Activated B cell treated with CpG ODN at 0.5 μM for 24 hours (primary cell): ENCODE measurements at regions of chr3 and their contacts with region 1.

Region 1: DNA sequence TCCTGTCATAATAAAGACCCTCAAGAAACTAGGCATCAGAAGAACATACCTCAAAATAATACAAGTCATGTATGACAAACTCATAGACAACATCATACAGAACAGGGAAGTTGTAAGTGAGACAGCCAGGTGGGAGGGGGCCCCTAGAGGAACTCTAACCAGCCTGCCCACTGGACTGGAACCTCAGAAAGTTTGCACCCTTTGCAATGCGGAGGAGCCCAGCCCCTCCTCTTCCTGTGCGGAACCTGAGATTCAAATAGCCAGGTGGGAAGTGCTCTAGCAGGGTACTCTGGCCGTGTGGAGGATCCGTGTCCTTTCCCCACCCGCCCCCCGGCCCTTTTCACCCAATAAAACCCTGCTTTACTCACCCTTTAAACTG is 387.0 kb upstream of the CBLB start:
- DNase-seq: peak; percentile 56
- ATAC-seq: peak; percentile 96
- H3K4me3 Mint-ChIP-seq: peak overlapping the region; percentile 86
- H3K27ac Mint-ChIP-seq: peak overlapping the region; percentile 86
- H3K4me1 Mint-ChIP-seq: peaks cover 42% of the 10 kb centered on the region
- H3K27me3 Mint-ChIP-seq: no peaks in the 10 kb centered on the region
- CTCF ChIP-seq: no peak

Region 2: DNA sequence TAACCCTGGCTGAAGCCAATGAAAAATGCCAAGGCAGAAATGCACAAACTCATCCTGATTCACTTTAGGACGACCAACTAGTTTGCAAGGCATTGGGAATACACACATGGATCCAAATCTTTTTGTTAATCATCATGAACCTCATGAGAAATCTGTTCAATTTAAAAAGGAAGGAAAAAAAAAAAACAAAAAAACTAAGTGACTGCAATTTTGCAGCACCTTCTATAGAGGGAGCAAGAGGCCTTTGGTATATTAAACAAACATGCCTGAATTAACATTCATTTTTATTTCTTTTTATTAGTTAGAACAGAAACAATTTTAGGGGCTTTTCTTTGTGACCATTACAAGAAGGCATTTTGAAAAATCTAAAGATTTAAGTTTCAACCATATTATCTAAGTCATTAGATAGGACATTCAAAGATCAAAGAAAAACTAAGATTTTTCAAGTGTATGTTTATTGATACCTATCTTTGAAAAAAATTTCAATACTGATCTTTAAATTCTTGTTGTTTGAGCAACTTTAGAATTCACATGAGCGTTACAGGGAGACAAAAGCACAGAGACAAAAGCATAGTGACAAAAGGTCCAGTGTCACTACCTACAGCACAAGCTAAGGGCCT is 569.5 kb before region 1 on chr3:
- CTCF ChIA-PET with region 1: no interaction called
- POLR2A ChIA-PET with region 1: no interaction called
- intact Hi-C with region 1: loop called (anchors 10 kb)
- DNase-seq: no peak
- ATAC-seq: peak; percentile 40
- H3K4me3 Mint-ChIP-seq: no peak overlapping the region
- H3K27ac Mint-ChIP-seq: peak overlapping the region; percentile 41
- H3K4me1 Mint-ChIP-seq: peaks cover 8% of the 10 kb centered on the region
- H3K27me3 Mint-ChIP-seq: no peaks in the 10 kb centered on the region
- CTCF ChIP-seq: peak; percentile 65

Region 3: DNA sequence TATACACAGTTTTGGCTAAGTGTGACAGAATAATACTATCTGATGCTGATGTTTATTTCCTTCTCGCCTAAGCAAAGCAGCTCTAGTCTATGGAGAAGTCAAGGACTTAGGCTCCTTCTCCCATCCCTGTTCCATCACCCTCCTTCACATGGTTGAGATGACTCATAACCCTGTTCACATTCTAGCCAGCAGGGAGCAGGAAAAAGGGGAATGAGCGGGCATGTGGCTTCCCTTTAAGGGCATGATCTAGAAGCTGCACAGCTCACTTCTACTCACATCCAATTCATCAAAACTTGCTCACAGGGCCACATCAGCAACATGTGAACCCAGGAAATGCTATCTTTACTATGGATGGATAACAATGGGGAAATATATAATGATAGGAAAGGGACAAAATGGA is 427.9 kb before region 1 on chr3:
- CTCF ChIA-PET with region 1: no interaction called
- POLR2A ChIA-PET with region 1: interaction called, 12 read pairs
- intact Hi-C with region 1: no loop called
- DNase-seq: no peak
- ATAC-seq: no peak
- H3K4me3 Mint-ChIP-seq: no peak overlapping the region
- H3K27ac Mint-ChIP-seq: peak overlapping the region; percentile 50
- H3K4me1 Mint-ChIP-seq: peaks cover 72% of the 10 kb centered on the region
- H3K27me3 Mint-ChIP-seq: no peaks in the 10 kb centered on the region
- CTCF ChIP-seq: no peak

Region 4: GRCh38 chr3:106176734-106177133 is 79.1 kb before region 1 on chr3:
- CTCF ChIA-PET with region 1: no interaction called
- POLR2A ChIA-PET with region 1: no interaction called
- intact Hi-C with region 1: loop called (anchors 2 kb)
- DNase-seq: no peak
- ATAC-seq: peak; percentile 77
- H3K4me3 Mint-ChIP-seq: peak overlapping the region; percentile 60
- H3K27ac Mint-ChIP-seq: peak overlapping the region; percentile 81
- H3K4me1 Mint-ChIP-seq: peaks cover 38% of the 10 kb centered on the region
- H3K27me3 Mint-ChIP-seq: no peaks in the 10 kb centered on the region
- CTCF ChIP-seq: no peak

Region 5: GRCh38 chr3:106215047-106215446 is 40.8 kb before region 1 on chr3:
- CTCF ChIA-PET with region 1: no interaction called
- POLR2A ChIA-PET with region 1: interaction called, 3 read pairs
- intact Hi-C with region 1: loop called (anchors 2 kb)
- DNase-seq: no peak
- ATAC-seq: no peak
- H3K4me3 Mint-ChIP-seq: no peak overlapping the region
- H3K27ac Mint-ChIP-seq: no peak overlapping the region
- H3K4me1 Mint-ChIP-seq: peaks cover 12% of the 10 kb centered on the region
- H3K27me3 Mint-ChIP-seq: no peaks in the 10 kb centered on the region
- CTCF ChIP-seq: no peak

Region 6: DNA sequence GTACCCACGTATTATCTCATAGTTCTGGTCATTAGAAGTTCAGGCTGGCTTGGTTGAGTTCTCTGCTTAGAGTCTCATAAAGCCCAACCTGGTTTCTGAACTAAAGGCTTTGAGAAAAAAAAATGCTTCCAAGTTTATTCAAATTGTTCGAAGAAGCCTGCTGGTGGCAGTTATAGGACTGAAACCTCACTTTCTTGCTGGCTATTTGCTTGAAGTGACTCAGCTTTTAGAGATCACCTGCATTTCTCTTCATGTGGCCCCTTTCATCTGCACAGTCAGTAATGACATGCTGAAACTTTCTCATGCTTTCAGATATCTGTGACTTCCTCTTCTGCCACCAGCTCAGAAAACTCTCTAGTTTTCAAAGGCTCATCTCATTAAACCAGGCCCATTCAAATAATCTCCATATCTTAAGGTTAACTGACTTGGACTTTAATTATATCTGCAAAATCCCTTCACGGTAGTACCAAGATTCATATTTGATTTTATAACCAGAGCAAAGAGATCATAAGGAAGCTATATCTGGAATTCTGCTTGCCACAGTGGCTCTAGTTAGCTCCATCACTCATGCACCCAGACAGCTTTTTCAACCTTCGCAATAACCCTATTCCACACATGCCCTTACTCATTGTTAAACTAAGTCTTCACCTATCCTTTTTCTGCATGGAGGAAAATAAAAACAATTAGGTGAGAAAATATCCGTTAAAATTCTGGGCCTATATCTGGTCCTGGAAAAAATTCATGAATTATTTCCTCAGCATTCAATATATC is 46.8 kb after region 1 on chr3:
- CTCF ChIA-PET with region 1: no interaction called
- POLR2A ChIA-PET with region 1: interaction called, 4 read pairs
- intact Hi-C with region 1: loop called (anchors 1 kb)
- DNase-seq: no peak
- ATAC-seq: peak; percentile 87
- H3K4me3 Mint-ChIP-seq: no peak overlapping the region
- H3K27ac Mint-ChIP-seq: peak overlapping the region; percentile 10
- H3K4me1 Mint-ChIP-seq: peaks cover 25% of the 10 kb centered on the region
- H3K27me3 Mint-ChIP-seq: no peaks in the 10 kb centered on the region
- CTCF ChIP-seq: no peak